CD8-positive, alpha-beta T cell (primary cell): ENCODE measurements at regions of chr21 and their contacts with region 1.

Region 1: GRCh38 chr21:33199516-33200217 is 30.1 kb upstream of the IFNAR2 start:
- DNase-seq: peak; percentile 63 to 92 (median 82)
- ATAC-seq: peak; percentile 93
- H3K4me3 ChIP-seq: no peak overlapping the region
- H3K4me3 Mint-ChIP-seq: no peak overlapping the region
- H3K27ac ChIP-seq: no peak overlapping the region
- H3K27ac Mint-ChIP-seq: peak overlapping the region; percentile 84
- H3K4me1 ChIP-seq: peaks cover 19% of the 10 kb centered on the region
- H3K4me1 Mint-ChIP-seq: peaks cover 28% of the 10 kb centered on the region
- H3K27me3 ChIP-seq: no peaks in the 10 kb centered on the region
- H3K27me3 Mint-ChIP-seq: no peaks in the 10 kb centered on the region
- CTCF ChIP-seq: peak; percentile 77

Region 2: DNA sequence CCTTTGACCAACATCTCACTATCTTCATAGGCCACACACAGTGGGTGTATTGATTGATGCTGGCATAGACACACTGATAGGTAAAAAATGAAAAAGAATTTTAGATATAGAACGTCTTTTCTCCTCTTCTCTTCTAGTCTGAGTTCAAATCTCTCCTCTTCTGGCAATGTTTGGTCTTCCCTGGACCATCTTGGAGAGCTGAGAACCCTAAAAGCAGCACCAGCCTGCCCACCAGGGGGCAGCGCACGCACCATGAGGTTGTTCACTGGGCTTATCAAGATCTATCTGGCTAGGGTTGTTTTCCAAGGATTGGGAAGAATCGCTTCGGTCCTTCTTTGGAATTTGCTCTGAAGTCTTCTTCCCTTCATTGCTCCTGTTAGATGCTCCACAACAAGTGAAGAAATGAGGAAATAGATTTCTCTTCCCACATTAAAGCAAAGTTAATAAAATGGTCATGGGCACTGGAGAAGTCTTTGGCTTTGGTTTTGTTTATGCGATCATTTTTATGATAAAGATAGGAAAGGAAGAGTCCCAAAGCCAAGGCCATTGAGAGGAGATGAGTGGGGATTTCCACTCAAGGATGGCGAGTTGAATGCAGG is 277.9 kb before region 1 on chr21:
- CTCF ChIA-PET with region 1: interaction called, 15 read pairs
- POLR2A ChIA-PET with region 1: no interaction called
- intact Hi-C with region 1: loop called in 1 of 2 experiments (anchors 5 kb)
- DNase-seq: peak in 8 of 9 experiments; percentile 26 to 65 (median 45)
- ATAC-seq: no peak
- H3K4me3 ChIP-seq: no peak overlapping the region
- H3K4me3 Mint-ChIP-seq: no peak overlapping the region
- H3K27ac ChIP-seq: no peak overlapping the region
- H3K27ac Mint-ChIP-seq: no peak overlapping the region
- H3K4me1 ChIP-seq: no peaks in the 10 kb centered on the region
- H3K4me1 Mint-ChIP-seq: peaks cover 9% of the 10 kb centered on the region
- H3K27me3 ChIP-seq: no peaks in the 10 kb centered on the region
- H3K27me3 Mint-ChIP-seq: no peaks in the 10 kb centered on the region
- CTCF ChIP-seq: peak; percentile 55

Region 3: GRCh38 chr21:33127154-33127893 is 72.3 kb before region 1 on chr21:
- CTCF ChIA-PET with region 1: interaction called, 7 read pairs
- POLR2A ChIA-PET with region 1: no interaction called
- intact Hi-C with region 1: loop called (anchors 1 to 2 kb)
- DNase-seq: peak; percentile 10 to 74 (median 61)
- ATAC-seq: peak; percentile 38
- H3K4me3 ChIP-seq: peak overlapping the region; percentile 22 to 32
- H3K4me3 Mint-ChIP-seq: peak overlapping the region; percentile 74
- H3K27ac ChIP-seq: no peak overlapping the region
- H3K27ac Mint-ChIP-seq: no peak overlapping the region
- H3K4me1 ChIP-seq: no peaks in the 10 kb centered on the region
- H3K4me1 Mint-ChIP-seq: peaks cover 9% of the 10 kb centered on the region
- H3K27me3 ChIP-seq: peaks cover 0 to 3% of the 10 kb centered on the region in 2 experiments
- H3K27me3 Mint-ChIP-seq: peaks cover 26% of the 10 kb centered on the region
- CTCF ChIP-seq: peak; percentile 56

Region 4: DNA sequence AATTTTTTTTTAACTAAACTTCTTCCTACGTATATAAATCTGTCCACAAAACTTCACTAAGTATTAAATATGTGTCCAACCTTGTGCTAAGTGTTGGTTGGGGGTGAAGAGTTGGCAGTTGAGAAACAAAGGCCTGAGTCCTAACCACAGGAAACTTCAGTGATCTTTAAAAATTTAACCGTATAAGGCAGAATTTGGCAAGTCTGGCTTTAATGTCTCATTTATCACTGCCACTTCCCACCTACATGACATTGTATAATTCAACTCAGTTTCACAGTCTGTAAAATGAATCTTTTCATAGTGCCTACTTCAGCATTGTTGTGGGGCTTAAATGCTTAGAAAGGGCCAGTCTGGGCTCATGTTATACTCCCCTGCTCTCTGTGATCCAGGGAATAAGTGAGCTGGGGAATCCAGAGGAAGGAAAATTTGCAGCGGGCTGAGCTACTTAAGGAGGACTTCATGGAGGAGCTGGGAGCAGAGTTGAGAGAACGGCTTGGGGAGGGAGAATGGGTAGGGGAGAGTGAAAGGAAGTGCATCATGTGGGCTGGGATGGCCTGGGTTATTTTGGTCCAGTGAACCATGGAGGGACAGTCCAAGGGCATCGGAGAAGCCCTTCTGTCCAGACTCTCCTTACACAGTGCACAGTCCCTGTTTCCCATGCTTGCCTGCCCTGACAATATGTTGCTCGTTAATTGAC is 44.6 kb after region 1 on chr21:
- CTCF ChIA-PET with region 1: interaction called, 9 read pairs
- POLR2A ChIA-PET with region 1: no interaction called
- intact Hi-C with region 1: loop called in 1 of 2 experiments (anchors 1 kb)
- DNase-seq: peak in 1 of 9 experiments; percentile 9
- ATAC-seq: peak; percentile 41
- H3K4me3 ChIP-seq: no peak overlapping the region
- H3K4me3 Mint-ChIP-seq: peak overlapping the region; percentile 68
- H3K27ac ChIP-seq: peak overlapping the region; percentile 9 to 54
- H3K27ac Mint-ChIP-seq: peak overlapping the region; percentile 95
- H3K4me1 ChIP-seq: peaks cover 82% of the 10 kb centered on the region
- H3K4me1 Mint-ChIP-seq: peaks cover 85% of the 10 kb centered on the region
- H3K27me3 ChIP-seq: no peaks in the 10 kb centered on the region
- H3K27me3 Mint-ChIP-seq: no peaks in the 10 kb centered on the region
- CTCF ChIP-seq: no peak

Region 5: GRCh38 chr21:33348706-33349105 is 149.0 kb after region 1 on chr21:
- CTCF ChIA-PET with region 1: interaction called, 10 read pairs
- POLR2A ChIA-PET with region 1: no interaction called
- intact Hi-C with region 1: no loop called
- DNase-seq: no peak
- ATAC-seq: no peak
- H3K4me3 ChIP-seq: no peak overlapping the region
- H3K4me3 Mint-ChIP-seq: no peak overlapping the region
- H3K27ac ChIP-seq: no peak overlapping the region
- H3K27ac Mint-ChIP-seq: no peak overlapping the region
- H3K4me1 ChIP-seq: peaks cover 15% of the 10 kb centered on the region
- H3K4me1 Mint-ChIP-seq: peaks cover 16% of the 10 kb centered on the region
- H3K27me3 ChIP-seq: no peaks in the 10 kb centered on the region
- H3K27me3 Mint-ChIP-seq: no peaks in the 10 kb centered on the region
- CTCF ChIP-seq: no peak

Region 6: DNA sequence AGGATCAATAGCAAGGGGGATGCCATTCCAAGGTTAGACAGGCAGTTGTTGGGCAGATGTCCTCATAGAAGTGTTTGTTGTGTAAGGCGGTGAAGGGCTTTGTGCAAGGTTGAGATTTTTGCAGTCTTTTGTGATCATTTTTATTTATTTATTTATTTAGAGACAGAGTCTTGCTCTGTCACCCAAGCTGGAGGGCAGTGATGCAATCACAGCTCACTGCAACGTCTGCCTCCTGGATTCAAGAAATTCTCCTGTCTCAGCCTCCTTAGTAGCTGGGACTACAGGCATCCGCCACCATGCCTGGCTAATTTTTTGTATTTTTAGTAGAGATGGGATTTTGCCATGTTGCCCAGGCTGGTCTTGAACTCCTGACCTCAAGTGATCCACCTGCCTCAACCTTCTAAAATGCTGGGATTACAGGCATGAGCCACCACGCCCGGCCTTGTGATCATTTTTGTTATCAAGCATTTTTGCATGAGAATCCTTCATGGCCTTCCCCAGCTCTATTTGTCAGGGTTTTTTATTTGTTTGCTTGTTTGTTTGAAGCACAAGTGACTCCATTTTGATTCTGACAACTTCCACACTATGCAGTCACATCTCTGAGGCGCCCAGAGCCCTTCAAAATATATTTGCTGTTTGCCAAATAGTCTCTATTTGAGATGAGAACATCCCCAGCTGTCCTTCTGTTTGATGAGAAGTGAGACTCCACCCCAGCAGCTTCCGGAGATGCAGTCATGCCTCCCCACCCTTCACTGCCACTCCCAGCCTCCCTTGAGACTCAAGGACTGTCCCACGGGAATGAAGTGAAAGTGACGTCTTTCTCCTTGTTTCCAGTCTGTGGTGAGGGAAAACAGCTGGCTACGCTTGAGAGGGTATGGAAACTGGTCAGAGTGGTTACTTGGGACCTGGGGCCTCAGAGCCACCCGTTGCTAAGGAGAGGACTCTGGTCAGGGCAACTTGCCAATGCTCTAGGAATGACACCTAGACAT is 242.1 kb after region 1 on chr21:
- CTCF ChIA-PET with region 1: interaction called, 39 read pairs
- POLR2A ChIA-PET with region 1: interaction called, 10 read pairs
- intact Hi-C with region 1: loop called (anchors 1 kb)
- DNase-seq: peak in 1 of 9 experiments; percentile 9
- ATAC-seq: no peak
- H3K4me3 ChIP-seq: no peak overlapping the region
- H3K4me3 Mint-ChIP-seq: no peak overlapping the region
- H3K27ac ChIP-seq: no peak overlapping the region
- H3K27ac Mint-ChIP-seq: peak overlapping the region; percentile 60
- H3K4me1 ChIP-seq: no peaks in the 10 kb centered on the region
- H3K4me1 Mint-ChIP-seq: peaks cover 3% of the 10 kb centered on the region
- H3K27me3 ChIP-seq: no peaks in the 10 kb centered on the region
- H3K27me3 Mint-ChIP-seq: no peaks in the 10 kb centered on the region
- CTCF ChIP-seq: no peak